B cell (primary cell): ENCODE measurements at regions of chr19 and their contacts with region 1.

Region 1: DNA sequence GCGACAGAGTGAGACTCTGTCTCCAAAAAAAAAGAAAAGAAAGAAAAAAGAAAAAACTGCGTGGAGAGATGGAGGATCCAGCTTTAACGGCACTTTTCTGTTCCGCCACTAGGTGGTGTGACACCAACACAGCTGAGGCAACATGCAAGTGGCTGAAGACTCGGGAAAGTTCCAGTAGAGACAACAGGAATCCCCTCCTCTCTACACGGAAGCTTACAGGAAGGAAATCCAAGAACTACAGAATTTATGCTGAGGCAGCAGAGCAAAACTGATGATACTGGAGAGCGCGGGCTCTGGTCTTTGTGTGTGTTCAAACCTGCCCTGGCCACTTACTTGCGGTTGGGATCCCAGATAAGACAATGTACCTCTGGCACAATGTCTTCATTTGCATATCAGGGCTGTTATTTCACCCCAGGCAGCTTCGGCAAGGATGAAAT is 9.9 kb downstream of the RANBP3 start:
- DNase-seq: peak; percentile 70
- ATAC-seq: peak; percentile 82
- H3K4me3 ChIP-seq: no peak overlapping the region
- H3K4me3 Mint-ChIP-seq: no peak overlapping the region
- H3K27ac ChIP-seq: peak overlapping the region in 1 of 2 donors; percentile 3
- H3K27ac Mint-ChIP-seq: peak overlapping the region; percentile 70
- H3K4me1 ChIP-seq: peaks cover 18 to 35% of the 10 kb centered on the region in 2 donors
- H3K4me1 Mint-ChIP-seq: peaks cover 76% of the 10 kb centered on the region
- H3K27me3 ChIP-seq: no peaks in the 10 kb centered on the region
- H3K27me3 Mint-ChIP-seq: no peaks in the 10 kb centered on the region
- CTCF ChIP-seq: peak; percentile 94

Region 2: GRCh38 chr19:5839065-5840017 is 128.7 kb before region 1 on chr19 and contains the start of gene FUT6:
- CTCF ChIA-PET with region 1: no interaction called
- POLR2A ChIA-PET with region 1: interaction called, 12 read pairs
- intact Hi-C with region 1: no loop called
- DNase-seq: no peak
- ATAC-seq: no peak
- H3K4me3 ChIP-seq: no peak within 1 kb of the TSS
- H3K4me3 Mint-ChIP-seq: no peak within 1 kb of the TSS
- H3K27ac ChIP-seq: no peak within 1 kb of the TSS
- H3K27ac Mint-ChIP-seq: no peak within 1 kb of the TSS
- H3K4me1 ChIP-seq: no peaks in the 10 kb centered on the region
- H3K4me1 Mint-ChIP-seq: no peaks in the 10 kb centered on the region
- H3K27me3 ChIP-seq: peaks cover 0 to 13% (median 0%) of the 10 kb centered on the region in 4 experiments
- H3K27me3 Mint-ChIP-seq: peaks cover 3% of the 10 kb centered on the region
- CTCF ChIP-seq: no peak
- total RNA-seq, gene FUT6: not detected in 2 replicates

Region 3: GRCh38 chr19:5929625-5930024 is 38.4 kb before region 1 on chr19:
- CTCF ChIA-PET with region 1: no interaction called
- POLR2A ChIA-PET with region 1: no interaction called
- intact Hi-C with region 1: no loop called
- DNase-seq: no peak
- ATAC-seq: no peak
- H3K4me3 ChIP-seq: no peak overlapping the region
- H3K4me3 Mint-ChIP-seq: no peak overlapping the region
- H3K27ac ChIP-seq: no peak overlapping the region
- H3K27ac Mint-ChIP-seq: no peak overlapping the region
- H3K4me1 ChIP-seq: peaks cover 0 to 16% of the 10 kb centered on the region in 2 donors
- H3K4me1 Mint-ChIP-seq: peaks cover 13% of the 10 kb centered on the region
- H3K27me3 ChIP-seq: no peaks in the 10 kb centered on the region
- H3K27me3 Mint-ChIP-seq: no peaks in the 10 kb centered on the region
- CTCF ChIP-seq: no peak

Region 4: DNA sequence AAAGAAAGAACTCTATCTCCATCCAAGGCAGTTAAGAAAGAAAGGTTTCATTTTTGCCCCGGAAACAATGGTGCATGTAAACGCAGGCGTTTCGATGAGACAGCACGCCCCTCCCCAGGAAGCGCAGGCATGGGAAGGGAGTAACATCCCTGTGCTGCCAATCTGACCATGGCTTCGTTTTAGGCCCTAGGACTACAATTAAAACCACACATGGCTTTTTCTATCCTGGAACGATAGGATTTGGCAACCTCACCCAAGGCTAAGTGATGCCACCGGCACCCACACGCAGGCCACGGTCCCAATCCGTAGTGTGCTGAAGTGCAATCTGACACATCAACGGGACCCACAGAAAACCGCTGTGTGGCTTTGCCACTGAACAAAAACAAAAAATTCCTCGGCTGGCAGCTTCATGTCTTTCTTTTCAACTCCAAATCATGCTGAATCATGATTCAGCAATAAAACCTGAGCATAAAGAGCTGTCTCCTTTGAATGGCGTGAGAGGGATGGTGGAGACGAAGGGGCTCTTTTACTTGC is 14.3 kb before region 1 on chr19:
- CTCF ChIA-PET with region 1: interaction called, 22 read pairs
- POLR2A ChIA-PET with region 1: no interaction called
- intact Hi-C with region 1: no loop called
- DNase-seq: no peak
- ATAC-seq: no peak
- H3K4me3 ChIP-seq: no peak overlapping the region
- H3K4me3 Mint-ChIP-seq: no peak overlapping the region
- H3K27ac ChIP-seq: peak overlapping the region in 1 of 2 donors; percentile 21
- H3K27ac Mint-ChIP-seq: no peak overlapping the region
- H3K4me1 ChIP-seq: peaks cover 33 to 43% of the 10 kb centered on the region in 2 donors
- H3K4me1 Mint-ChIP-seq: peaks cover 85% of the 10 kb centered on the region
- H3K27me3 ChIP-seq: no peaks in the 10 kb centered on the region
- H3K27me3 Mint-ChIP-seq: no peaks in the 10 kb centered on the region
- CTCF ChIP-seq: no peak

Region 5: GRCh38 chr19:5987077-5987818 is 19.2 kb after region 1 on chr19:
- CTCF ChIA-PET with region 1: interaction called, 51 read pairs
- POLR2A ChIA-PET with region 1: no interaction called
- intact Hi-C with region 1: no loop called
- DNase-seq: peak; percentile 79
- ATAC-seq: peak; percentile 65
- H3K4me3 ChIP-seq: peak overlapping the region; percentile 36 to 66 (median 48)
- H3K4me3 Mint-ChIP-seq: peak overlapping the region; percentile 82
- H3K27ac ChIP-seq: no peak overlapping the region
- H3K27ac Mint-ChIP-seq: no peak overlapping the region
- H3K4me1 ChIP-seq: peaks cover 0 to 18% of the 10 kb centered on the region in 2 donors
- H3K4me1 Mint-ChIP-seq: peaks cover 20% of the 10 kb centered on the region
- H3K27me3 ChIP-seq: no peaks in the 10 kb centered on the region
- H3K27me3 Mint-ChIP-seq: no peaks in the 10 kb centered on the region
- CTCF ChIP-seq: peak; percentile 97

Region 6: GRCh38 chr19:6021878-6022569 is 54.0 kb after region 1 on chr19:
- CTCF ChIA-PET with region 1: interaction called, 24 read pairs
- POLR2A ChIA-PET with region 1: no interaction called
- intact Hi-C with region 1: loop called (anchors 5 kb)
- DNase-seq: peak; percentile 72
- ATAC-seq: peak; percentile 82
- H3K4me3 ChIP-seq: no peak overlapping the region
- H3K4me3 Mint-ChIP-seq: no peak overlapping the region
- H3K27ac ChIP-seq: no peak overlapping the region
- H3K27ac Mint-ChIP-seq: no peak overlapping the region
- H3K4me1 ChIP-seq: no peaks in the 10 kb centered on the region
- H3K4me1 Mint-ChIP-seq: peaks cover 2% of the 10 kb centered on the region
- H3K27me3 ChIP-seq: no peaks in the 10 kb centered on the region
- H3K27me3 Mint-ChIP-seq: no peaks in the 10 kb centered on the region
- CTCF ChIP-seq: peak; percentile 74

Region 7: DNA sequence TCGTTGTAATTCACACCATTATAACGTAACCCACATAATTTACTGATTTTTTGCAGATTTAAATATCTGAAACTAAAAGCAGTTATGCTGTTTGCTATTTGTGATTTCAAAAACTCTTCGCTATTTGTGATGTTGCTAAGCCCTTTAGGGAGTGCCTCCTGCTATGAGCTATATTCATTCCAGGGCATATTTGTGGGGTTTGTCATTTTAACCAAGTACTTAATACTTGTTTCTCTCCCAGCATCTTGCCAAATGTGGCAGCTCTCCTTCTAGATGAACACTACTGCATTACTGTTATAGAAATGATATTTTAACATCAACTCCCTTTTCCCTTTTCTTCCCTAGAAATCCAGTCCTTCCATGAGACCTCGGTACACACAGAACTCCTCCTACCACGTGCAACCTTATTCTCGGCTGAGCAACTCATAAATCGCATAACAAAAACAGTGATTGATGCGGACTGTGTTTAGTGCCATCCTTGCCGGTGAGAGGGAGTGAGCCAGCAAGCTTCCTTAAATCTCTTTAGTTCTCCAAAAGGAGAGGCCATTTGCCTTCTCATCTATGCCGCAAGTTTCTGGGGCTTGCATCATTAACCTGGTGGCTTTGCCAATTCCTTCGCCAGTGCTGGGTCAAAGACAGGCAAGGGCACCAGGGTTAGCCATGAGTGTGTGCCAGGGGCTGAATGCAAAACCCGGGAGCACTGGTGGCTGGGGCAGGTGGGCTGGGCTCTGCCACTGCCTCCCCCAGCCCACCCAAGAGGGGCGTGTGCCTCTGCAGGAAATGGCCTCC is 108.9 kb after region 1 on chr19:
- CTCF ChIA-PET with region 1: no interaction called
- POLR2A ChIA-PET with region 1: no interaction called
- intact Hi-C with region 1: no loop called
- DNase-seq: no peak
- ATAC-seq: no peak
- H3K4me3 ChIP-seq: no peak overlapping the region
- H3K4me3 Mint-ChIP-seq: no peak overlapping the region
- H3K27ac ChIP-seq: no peak overlapping the region
- H3K27ac Mint-ChIP-seq: no peak overlapping the region
- H3K4me1 ChIP-seq: peaks cover 0 to 9% of the 10 kb centered on the region in 2 donors
- H3K4me1 Mint-ChIP-seq: peaks cover 8% of the 10 kb centered on the region
- H3K27me3 ChIP-seq: no peaks in the 10 kb centered on the region
- H3K27me3 Mint-ChIP-seq: no peaks in the 10 kb centered on the region
- CTCF ChIP-seq: no peak